ENCODE measurements at regions of chr7 and their contacts with region 1.

Region 1: GRCh38 chr7:6558837-6559236 is 7.6 kb upstream of the GRID2IP start:
- DNase-seq: peak; percentile 78 to 87
- ATAC-seq: peak; percentile 91 to 93
- H3K4me3 ChIP-seq: no peak overlapping the region
- H3K27ac ChIP-seq: no peak overlapping the region
- H3K4me1 ChIP-seq: 0 out of 3 replicates have a peak, but pooled peaks cover 3% of the 10 kb centered on the region
- CTCF ChIP-seq: peak; percentile 46; the same call in 2 of the 3 replicates
- EP300 ChIP-seq: no peak
- POLR2A ChIP-seq: no peak
- RAD21 ChIP-seq: peak; percentile 56 to 67

Region 2: DNA sequence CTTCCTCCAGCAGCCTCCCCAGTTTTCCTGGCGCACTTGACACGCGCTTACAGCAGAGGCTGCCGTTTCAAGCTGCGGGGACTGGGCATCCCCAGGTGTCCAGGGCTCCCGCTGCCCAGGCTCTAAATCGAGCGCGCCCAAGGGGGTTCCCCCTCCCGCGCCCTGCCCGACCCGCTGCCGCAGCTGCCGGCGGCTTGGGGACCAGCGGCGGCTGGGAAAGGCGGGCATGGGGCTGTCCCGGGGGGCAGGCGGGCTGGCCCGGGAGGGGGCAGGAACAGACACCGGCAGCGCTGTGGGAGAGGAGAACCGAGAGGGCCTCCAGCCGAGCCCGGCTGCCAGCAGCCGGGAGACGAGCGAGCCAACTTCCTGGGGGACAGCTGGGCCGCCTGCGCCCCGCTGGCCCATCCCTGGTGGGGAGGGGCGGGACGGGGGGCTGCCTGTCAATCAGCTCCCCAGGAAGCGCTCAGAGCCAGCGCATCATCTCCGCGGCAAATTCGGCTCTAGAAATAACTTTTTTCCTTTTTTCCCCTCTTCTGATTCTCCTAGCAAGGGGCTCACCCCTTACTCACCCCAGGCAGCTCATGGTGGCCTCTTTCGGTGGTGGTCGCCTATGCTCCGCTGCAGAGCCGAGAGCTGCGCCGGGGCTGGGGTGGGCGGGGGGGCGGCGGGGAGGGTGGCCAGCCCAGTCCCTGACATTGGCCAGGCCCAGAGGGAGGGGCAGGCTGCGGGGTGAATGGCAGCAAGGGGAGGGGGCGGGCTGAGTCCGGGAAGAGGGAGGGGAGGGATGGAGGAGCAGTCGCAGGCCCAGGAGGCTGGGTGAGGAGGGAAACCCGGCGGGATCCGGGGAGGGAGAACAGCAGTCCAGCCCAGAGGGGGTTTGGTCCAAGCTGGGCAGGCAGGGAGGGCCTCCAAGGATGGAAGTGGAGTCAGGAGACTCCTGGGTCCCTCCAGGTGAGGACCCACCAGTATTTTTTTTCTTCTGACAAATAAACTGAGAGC is 22.3 kb before region 1 on chr7:
- CTCF ChIA-PET with region 1: interaction called, 15 read pairs
- POLR2A ChIA-PET with region 1: no interaction called
- DNase-seq: no peak
- ATAC-seq: peak; percentile 2 to 58; a peak in 3 of 6 replicates
- H3K4me3 ChIP-seq: peak overlapping the region; percentile 47
- H3K27ac ChIP-seq: peak overlapping the region; percentile 21 to 69; a peak in 4 of 6 replicates
- H3K4me1 ChIP-seq: no peaks in the 10 kb centered on the region
- CTCF ChIP-seq: no peak
- EP300 ChIP-seq: no peak
- POLR2A ChIP-seq: no peak
- RAD21 ChIP-seq: no peak

Region 3: GRCh38 chr7:6545398-6546126 is 13.3 kb before region 1 on chr7:
- CTCF ChIA-PET with region 1: interaction called, 12 read pairs
- POLR2A ChIA-PET with region 1: no interaction called
- DNase-seq: no peak
- ATAC-seq: no peak
- H3K4me3 ChIP-seq: no peak overlapping the region
- H3K27ac ChIP-seq: no peak overlapping the region
- H3K4me1 ChIP-seq: no peaks in the 10 kb centered on the region
- CTCF ChIP-seq: no peak
- EP300 ChIP-seq: no peak
- POLR2A ChIP-seq: no peak
- RAD21 ChIP-seq: no peak

Region 4: GRCh38 chr7:6571160-6571779 is 12.4 kb after region 1 on chr7:
- CTCF ChIA-PET with region 1: interaction called, 26 read pairs
- POLR2A ChIA-PET with region 1: no interaction called
- DNase-seq: no peak
- ATAC-seq: peak; percentile 54 to 67; a peak in 5 of 6 replicates
- H3K4me3 ChIP-seq: no peak overlapping the region
- H3K27ac ChIP-seq: no peak overlapping the region
- H3K4me1 ChIP-seq: peaks cover 2% of the 10 kb centered on the region; the same call in 1 of the 3 replicates
- CTCF ChIP-seq: no peak
- EP300 ChIP-seq: no peak
- POLR2A ChIP-seq: no peak
- RAD21 ChIP-seq: no peak

Region 5: GRCh38 chr7:6577365-6578113 is 18.7 kb after region 1 on chr7 and contains the start of gene ZDHHC4:
- CTCF ChIA-PET with region 1: interaction called, 26 read pairs
- POLR2A ChIA-PET with region 1: interaction called, 6 read pairs
- DNase-seq: peak; percentile 93 to 99
- ATAC-seq: peak; percentile 97
- H3K4me3 ChIP-seq: peak within 1 kb of the TSS; percentile 77
- H3K27ac ChIP-seq: peak within 1 kb of the TSS; percentile 93 to 95
- H3K4me1 ChIP-seq: peaks cover 20% of the 10 kb centered on the region
- CTCF ChIP-seq: no peak
- EP300 ChIP-seq: no peak
- POLR2A ChIP-seq: peak; percentile 97
- RAD21 ChIP-seq: no peak
- polyA plus RNA-seq, gene ZDHHC4: 118 and 149 TPM in 2 replicates

Measured in A549 (cell line).